ENCODE measurements at regions of chr5 and their contacts with region 1.

Region 1: DNA sequence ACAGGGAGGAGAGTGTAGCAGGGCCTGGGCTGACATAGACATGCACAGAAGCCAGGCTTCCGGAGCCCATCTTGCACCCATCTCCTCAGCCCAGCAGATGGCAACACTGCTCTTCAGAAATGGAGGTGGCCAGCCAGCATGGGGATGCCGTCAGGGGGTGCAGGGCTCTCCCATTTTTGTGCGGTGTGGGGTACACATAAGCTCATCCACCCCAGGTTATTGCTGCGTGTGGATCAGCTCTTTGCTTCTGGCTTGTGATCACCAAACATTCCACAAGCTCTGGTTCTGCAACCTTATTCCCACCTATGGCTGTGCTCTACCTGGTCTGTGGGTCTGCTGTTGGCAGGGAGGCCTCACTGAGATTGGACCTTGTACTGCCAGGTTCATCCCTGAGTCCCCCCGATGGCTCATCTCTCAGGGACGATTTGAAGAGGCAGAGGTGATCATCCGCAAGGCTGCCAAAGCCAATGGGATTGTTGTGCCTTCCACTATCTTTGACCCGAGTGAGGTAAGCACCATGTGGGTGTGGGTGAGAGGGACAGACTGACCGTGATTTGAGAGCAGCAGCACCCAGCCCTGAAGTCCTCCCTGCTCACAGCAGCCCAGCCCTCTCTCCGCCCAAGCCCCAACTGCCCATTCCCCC is 17.3 kb downstream of the SLC22A5 start:
- DNase-seq: peak; percentile 87
- ATAC-seq: peak; percentile 86
- H3K4me3 ChIP-seq: no peak overlapping the region
- H3K4me3 Mint-ChIP-seq: no peak overlapping the region
- H3K27ac ChIP-seq: no peak overlapping the region
- H3K27ac Mint-ChIP-seq: peak overlapping the region; percentile 43
- H3K4me1 ChIP-seq: peaks cover 15 to 18% of the 10 kb centered on the region in 2 donors
- H3K4me1 Mint-ChIP-seq: peaks cover 19% of the 10 kb centered on the region
- H3K27me3 ChIP-seq: no peaks in the 10 kb centered on the region
- H3K27me3 Mint-ChIP-seq: no peaks in the 10 kb centered on the region
- CTCF ChIP-seq: peak; percentile 83

Region 2: DNA sequence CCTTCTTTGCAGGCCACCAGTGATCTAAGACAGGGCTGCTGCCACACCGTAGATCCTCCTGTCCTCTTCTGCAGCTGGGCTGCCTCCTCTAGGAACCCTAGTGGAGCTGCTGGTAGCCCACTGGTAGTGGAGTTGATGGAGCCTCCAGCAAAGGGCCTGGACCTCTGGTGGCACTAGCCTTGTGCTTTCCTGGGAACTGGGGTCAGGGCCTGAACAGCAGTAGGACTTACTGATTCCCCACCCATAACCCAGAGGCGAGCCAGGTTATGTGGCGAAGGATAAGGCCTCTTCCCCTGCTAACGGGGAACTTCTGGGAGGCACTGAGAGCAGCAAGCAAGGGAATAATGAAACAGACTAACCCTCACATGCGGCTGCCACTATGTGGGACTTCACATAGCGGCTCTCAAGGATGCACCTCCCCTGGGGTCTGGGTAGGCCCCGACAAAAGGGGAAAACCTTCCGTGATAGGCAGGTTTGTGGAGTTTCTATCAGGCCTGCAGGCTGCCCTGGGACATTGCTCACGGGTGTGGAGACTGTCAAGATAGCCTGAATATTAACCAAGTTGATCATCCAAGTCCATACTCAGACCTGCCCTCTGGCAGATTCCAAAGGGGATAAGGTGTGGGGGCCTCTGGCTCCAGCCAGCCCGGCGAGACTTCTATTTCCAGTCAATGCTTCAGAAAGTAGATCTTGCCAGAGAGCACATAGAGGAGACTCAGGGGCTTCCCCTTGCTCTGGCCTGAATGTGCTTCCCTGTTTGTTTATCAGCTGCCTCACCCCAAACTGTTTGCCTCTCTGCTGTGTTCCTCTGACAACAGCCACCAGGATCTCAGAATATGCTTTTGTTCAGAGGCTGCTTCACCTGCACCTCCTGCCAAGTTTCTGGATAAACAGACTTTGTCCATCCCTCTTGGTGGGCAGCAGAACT is 85.2 kb before region 1 on chr5:
- CTCF ChIA-PET with region 1: no interaction called
- POLR2A ChIA-PET with region 1: no interaction called
- intact Hi-C with region 1: no loop called
- DNase-seq: no peak
- ATAC-seq: no peak
- H3K4me3 ChIP-seq: no peak overlapping the region
- H3K4me3 Mint-ChIP-seq: no peak overlapping the region
- H3K27ac ChIP-seq: no peak overlapping the region
- H3K27ac Mint-ChIP-seq: no peak overlapping the region
- H3K4me1 ChIP-seq: no peaks in the 10 kb centered on the region
- H3K4me1 Mint-ChIP-seq: no peaks in the 10 kb centered on the region
- H3K27me3 ChIP-seq: peaks cover 0 to 2% (median 0%) of the 10 kb centered on the region in 4 experiments
- H3K27me3 Mint-ChIP-seq: peaks cover 5% of the 10 kb centered on the region
- CTCF ChIP-seq: no peak

Region 3: DNA sequence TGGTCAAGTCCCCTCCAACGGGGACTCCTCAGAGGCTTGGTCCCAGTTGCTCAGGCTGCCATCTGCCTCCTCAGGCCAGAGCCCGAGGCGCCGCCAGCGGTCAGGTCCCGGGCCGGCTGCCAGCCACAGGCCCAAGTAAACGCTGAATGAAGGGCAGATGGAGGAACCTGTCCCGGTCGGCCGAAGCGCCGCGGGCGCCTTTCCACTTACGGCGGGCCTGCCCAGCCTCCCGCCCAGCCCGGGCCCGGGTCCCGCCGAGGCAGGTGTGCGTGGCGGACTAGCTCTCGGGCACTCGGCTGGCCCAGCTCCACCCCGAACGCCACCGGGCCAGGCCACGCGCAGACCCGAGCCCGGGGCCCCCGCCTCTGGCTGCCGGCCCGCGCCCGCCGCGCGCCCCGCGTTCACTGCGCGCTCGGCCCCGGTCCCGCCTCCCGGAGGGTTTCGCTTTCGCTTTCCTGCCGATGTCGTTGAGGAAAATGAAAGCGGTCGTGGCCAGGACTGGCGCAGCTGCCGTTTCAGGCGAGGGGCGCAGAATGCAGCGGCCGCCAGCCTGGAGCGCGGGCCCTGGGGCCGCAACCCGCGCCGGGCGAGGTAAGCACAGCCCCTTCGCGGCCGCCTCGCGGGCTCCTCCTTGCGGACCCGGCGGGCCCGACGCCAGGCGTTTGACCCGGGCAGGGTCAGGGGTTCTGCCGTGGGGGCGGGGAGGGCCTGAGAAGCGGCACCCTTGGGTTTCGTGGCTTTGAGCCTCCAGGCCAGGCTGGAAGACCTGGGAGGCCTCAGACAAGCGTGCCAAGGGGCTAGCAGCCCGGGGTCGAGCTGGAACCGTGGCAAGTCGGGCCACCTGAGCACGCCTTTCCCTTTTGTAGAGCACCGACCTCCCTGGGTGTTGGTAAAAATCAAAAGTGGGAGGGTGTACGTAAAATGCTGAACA is 24.0 kb after region 1 on chr5:
- CTCF ChIA-PET with region 1: interaction called, 46 read pairs
- POLR2A ChIA-PET with region 1: interaction called, 6 read pairs
- intact Hi-C with region 1: loop called (anchors 1 kb)
- DNase-seq: peak; percentile 94
- ATAC-seq: peak; percentile 81
- H3K4me3 ChIP-seq: peak overlapping the region; percentile 71 to 93 (median 78)
- H3K4me3 Mint-ChIP-seq: peak overlapping the region; percentile 98
- H3K27ac ChIP-seq: peak overlapping the region; percentile 96 to 97
- H3K27ac Mint-ChIP-seq: peak overlapping the region; percentile 99
- H3K4me1 ChIP-seq: peaks cover 61 to 63% of the 10 kb centered on the region in 2 donors
- H3K4me1 Mint-ChIP-seq: peaks cover 68% of the 10 kb centered on the region
- H3K27me3 ChIP-seq: no peaks in the 10 kb centered on the region
- H3K27me3 Mint-ChIP-seq: no peaks in the 10 kb centered on the region
- CTCF ChIP-seq: peak; percentile 77

Region 4: DNA sequence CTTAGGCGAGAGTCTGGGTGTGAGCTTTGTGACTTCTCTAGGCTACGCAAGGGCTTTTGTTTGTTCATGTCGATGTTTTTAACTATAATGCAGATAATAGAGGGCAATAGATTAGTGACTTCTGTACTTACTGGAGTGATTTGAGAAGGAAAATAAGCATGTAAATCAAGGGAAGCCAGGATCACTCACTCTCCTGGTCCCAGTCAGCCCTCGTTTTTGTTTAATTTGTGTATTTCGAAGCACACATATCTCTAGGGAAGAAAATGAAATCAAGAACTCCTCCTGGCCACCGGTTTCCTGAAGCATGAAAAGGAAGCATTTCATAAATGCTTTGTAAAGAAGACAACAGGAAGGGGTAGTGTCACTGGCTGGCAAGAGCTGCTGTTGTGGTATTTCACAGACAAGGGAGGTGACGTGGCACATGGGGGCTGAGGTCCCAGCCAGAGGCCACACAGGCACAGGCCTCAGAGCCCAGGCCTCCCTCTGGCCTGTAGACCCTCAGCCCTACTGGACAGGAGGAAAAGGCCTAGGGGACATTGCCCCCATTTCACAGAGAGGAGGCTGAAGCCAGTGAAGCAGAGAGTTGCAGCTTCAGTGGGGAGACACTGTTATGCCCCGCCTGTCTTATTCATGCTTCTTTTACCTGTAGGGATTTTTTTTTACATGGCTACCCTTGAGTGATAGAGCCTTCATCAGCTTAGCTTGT is 69.7 kb after region 1 on chr5:
- CTCF ChIA-PET with region 1: interaction called, 18 read pairs
- POLR2A ChIA-PET with region 1: no interaction called
- intact Hi-C with region 1: no loop called
- DNase-seq: peak; percentile 84
- ATAC-seq: peak; percentile 78
- H3K4me3 ChIP-seq: peak overlapping the region; percentile 12 to 53 (median 30)
- H3K4me3 Mint-ChIP-seq: peak overlapping the region; percentile 74
- H3K27ac ChIP-seq: peak overlapping the region; percentile 88 to 93
- H3K27ac Mint-ChIP-seq: peak overlapping the region; percentile 99
- H3K4me1 ChIP-seq: peaks cover 79 to 84% of the 10 kb centered on the region in 2 donors
- H3K4me1 Mint-ChIP-seq: peaks cover 92% of the 10 kb centered on the region
- H3K27me3 ChIP-seq: no peaks in the 10 kb centered on the region
- H3K27me3 Mint-ChIP-seq: no peaks in the 10 kb centered on the region
- CTCF ChIP-seq: no peak

Region 5: GRCh38 chr5:132490486-132491367 is 104.0 kb after region 1 on chr5 and contains the start of gene IRF1:
- CTCF ChIA-PET with region 1: interaction called, 528 read pairs
- POLR2A ChIA-PET with region 1: interaction called, 12 read pairs
- intact Hi-C with region 1: no loop called
- DNase-seq: peak; percentile 98
- ATAC-seq: peak; percentile 70
- H3K4me3 ChIP-seq: peak within 1 kb of the TSS; percentile 81 to 99 (median 89)
- H3K4me3 Mint-ChIP-seq: peak within 1 kb of the TSS; percentile 96
- H3K27ac ChIP-seq: peak within 1 kb of the TSS; percentile 99
- H3K27ac Mint-ChIP-seq: peak within 1 kb of the TSS; percentile 96
- H3K4me1 ChIP-seq: peaks cover 74 to 81% of the 10 kb centered on the region in 2 donors
- H3K4me1 Mint-ChIP-seq: peaks cover 76% of the 10 kb centered on the region
- H3K27me3 ChIP-seq: no peaks in the 10 kb centered on the region
- H3K27me3 Mint-ChIP-seq: no peaks in the 10 kb centered on the region
- CTCF ChIP-seq: no peak
- total RNA-seq, gene IRF1: 304 and 306 TPM in 2 replicates

Region 6: DNA sequence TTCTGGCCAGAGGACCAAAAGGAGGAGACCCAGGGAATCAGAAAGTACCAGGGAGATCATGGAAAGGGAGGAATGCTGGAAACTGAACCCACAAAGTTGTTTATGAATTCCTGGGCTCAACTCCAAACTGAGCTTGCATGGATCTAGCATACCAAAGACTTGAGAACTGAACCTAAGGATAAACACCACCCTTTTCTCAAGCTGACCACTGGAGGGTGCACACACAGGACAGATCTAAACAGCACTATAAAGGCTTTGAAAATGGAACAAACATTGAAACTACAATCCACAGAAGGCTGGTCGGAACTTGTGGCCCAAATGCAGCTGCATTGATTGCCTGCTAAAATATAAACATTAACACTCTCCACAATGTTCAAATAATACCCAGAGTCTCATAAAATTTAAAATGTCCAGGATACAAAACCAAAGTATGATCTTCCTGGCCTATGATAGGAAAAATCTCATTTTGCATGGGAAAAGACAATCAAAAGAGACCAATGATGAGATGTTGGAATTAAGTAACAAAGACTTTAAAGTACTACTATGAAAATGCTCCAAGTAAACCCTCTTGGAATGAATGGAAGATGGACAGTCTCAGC is 119.4 kb after region 1 on chr5:
- CTCF ChIA-PET with region 1: interaction called, 528 read pairs
- POLR2A ChIA-PET with region 1: interaction called, 15 read pairs
- intact Hi-C with region 1: loop called (anchors 1 kb)
- DNase-seq: peak; percentile 43
- ATAC-seq: no peak
- H3K4me3 ChIP-seq: no peak overlapping the region
- H3K4me3 Mint-ChIP-seq: no peak overlapping the region
- H3K27ac ChIP-seq: no peak overlapping the region
- H3K27ac Mint-ChIP-seq: no peak overlapping the region
- H3K4me1 ChIP-seq: peaks cover 7% of the 10 kb centered on the region in 2 donors
- H3K4me1 Mint-ChIP-seq: peaks cover 8% of the 10 kb centered on the region
- H3K27me3 ChIP-seq: peaks cover 0 to 2% (median 0%) of the 10 kb centered on the region in 4 experiments
- H3K27me3 Mint-ChIP-seq: peaks cover 4% of the 10 kb centered on the region
- CTCF ChIP-seq: peak; percentile 27

Region 7: DNA sequence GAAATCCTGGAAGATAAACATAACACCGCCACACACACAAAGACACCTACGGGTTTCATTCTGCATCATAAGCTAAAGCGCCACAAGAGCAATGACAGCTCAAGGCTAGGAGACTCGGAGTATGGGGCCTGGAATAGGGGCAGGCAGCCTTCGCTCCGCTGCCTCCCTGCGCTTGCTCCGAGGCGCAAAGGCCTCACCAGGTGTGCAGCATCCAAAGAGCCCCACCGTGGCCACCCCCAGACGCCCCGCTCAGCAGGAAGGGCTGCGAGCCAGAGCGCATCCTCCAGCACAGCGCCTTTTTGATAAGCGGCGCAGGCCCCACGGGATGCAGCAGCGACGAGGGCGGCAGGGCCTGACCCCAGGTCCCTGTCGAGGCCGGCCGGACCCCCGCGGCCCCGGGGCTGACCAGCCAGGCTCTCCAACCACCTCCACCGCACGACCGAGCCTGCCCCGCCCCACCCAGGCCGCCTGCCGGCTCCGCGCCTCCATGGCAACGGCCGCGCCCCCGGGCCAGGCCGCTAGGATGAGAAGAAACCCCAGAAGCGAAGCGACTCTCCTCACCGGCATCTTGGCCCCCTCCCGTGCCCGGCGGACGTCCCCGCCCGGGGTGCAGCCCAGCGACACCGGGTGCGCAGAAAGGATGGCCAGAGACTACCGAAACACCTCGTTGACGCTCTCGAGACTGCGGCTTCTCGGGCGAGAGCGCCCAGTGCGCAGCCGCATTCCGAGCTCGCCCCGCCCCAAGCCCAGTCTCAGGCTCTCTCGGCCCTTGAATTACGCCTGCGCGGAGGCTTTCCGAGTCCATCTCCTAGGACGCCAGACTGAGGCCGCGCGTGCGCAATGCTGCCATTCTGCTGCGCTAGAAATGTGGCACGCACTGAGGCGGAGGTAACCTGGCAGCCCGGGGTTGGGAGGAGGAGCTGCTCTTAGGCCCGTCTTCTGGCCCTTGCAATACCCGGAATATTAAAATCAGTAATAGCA is 350.4 kb after region 1 on chr5 and contains the start of gene KIF3A:
- CTCF ChIA-PET with region 1: no interaction called
- POLR2A ChIA-PET with region 1: no interaction called
- intact Hi-C with region 1: loop called (anchors 1 kb)
- DNase-seq: peak; percentile 98
- ATAC-seq: peak; percentile 90
- H3K4me3 ChIP-seq: peak within 1 kb of the TSS; percentile 57 to 80 (median 74)
- H3K4me3 Mint-ChIP-seq: peak within 1 kb of the TSS; percentile 89
- H3K27ac ChIP-seq: peak within 1 kb of the TSS; percentile 34 to 58
- H3K27ac Mint-ChIP-seq: peak within 1 kb of the TSS; percentile 96
- H3K4me1 ChIP-seq: peaks cover 11 to 13% of the 10 kb centered on the region in 2 donors
- H3K4me1 Mint-ChIP-seq: peaks cover 22% of the 10 kb centered on the region
- H3K27me3 ChIP-seq: peaks cover 0 to 3% (median 2%) of the 10 kb centered on the region in 4 experiments
- H3K27me3 Mint-ChIP-seq: peaks cover 10% of the 10 kb centered on the region
- CTCF ChIP-seq: peak; percentile 9
- total RNA-seq, gene KIF3A: 13.6 and 16.0 TPM in 2 replicates

Region 8: DNA sequence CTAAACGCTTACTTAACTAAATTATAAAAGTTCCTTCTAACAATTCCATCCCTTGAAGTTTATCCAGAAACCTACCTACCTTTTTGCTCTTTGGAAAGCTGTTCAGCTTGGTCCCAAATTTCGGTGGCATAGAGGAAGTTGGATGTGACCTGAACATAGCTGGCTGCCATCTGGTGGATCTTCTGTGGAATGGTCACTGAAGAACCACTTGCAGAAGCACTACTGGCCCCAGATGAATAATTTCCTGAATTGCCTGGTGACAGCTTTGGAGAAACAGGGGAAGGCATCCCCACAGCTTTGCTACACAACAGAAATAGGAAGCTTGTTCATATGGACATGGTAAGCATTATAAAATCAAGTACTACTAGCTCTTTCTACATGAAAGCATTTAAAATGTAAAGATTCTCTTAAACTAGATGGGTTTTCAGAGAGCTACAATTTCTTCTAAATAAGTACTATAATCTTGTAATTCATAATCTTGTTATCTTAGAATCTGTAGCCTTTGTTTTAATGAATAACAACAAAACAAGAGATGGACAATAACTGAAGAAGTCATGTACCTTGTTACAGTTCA is 496.6 kb after region 1 on chr5:
- CTCF ChIA-PET with region 1: interaction called, 24 read pairs
- POLR2A ChIA-PET with region 1: no interaction called
- intact Hi-C with region 1: loop called (anchors 1 kb)
- DNase-seq: peak; percentile 69
- ATAC-seq: peak; percentile 53
- H3K4me3 ChIP-seq: no peak overlapping the region
- H3K4me3 Mint-ChIP-seq: no peak overlapping the region
- H3K27ac ChIP-seq: no peak overlapping the region
- H3K27ac Mint-ChIP-seq: no peak overlapping the region
- H3K4me1 ChIP-seq: no peaks in the 10 kb centered on the region
- H3K4me1 Mint-ChIP-seq: peaks cover 8% of the 10 kb centered on the region
- H3K27me3 ChIP-seq: no peaks in the 10 kb centered on the region
- H3K27me3 Mint-ChIP-seq: no peaks in the 10 kb centered on the region
- CTCF ChIP-seq: peak; percentile 78